Aorta (tissue), 5 donors: ENCODE measurements at regions of chr4 and their contacts with region 1.

Region 1: GRCh38 chr4:119299741-119300100 is 22.2 kb downstream of the FABP2 start:
- DNase-seq: no peak
- ATAC-seq: no peak
- H3K4me3 ChIP-seq: peak overlapping the region; percentile 81 to 93
- H3K27ac ChIP-seq: peak overlapping the region; percentile 54 to 92
- H3K4me1 ChIP-seq: peaks cover 1 to 6% of the 10 kb centered on the region in 2 donors
- H3K27me3 ChIP-seq: no peaks in the 10 kb centered on the region

Region 2: GRCh38 chr4:118740869-118741268 is 558.9 kb before region 1 on chr4:
- intact Hi-C with region 1: loop called in 1 of 2 experiments (anchors 10 kb)
- DNase-seq: no peak
- ATAC-seq: no peak
- H3K4me3 ChIP-seq: no peak overlapping the region
- H3K27ac ChIP-seq: no peak overlapping the region
- H3K4me1 ChIP-seq: peaks cover 2 to 3% of the 10 kb centered on the region in 2 donors
- H3K27me3 ChIP-seq: no peaks in the 10 kb centered on the region